Activated B cell treated with CpG ODN at 0.5 μM for 24 hours (primary cell): ENCODE measurements at regions of chr9 and their contacts with region 1.

Region 1: DNA sequence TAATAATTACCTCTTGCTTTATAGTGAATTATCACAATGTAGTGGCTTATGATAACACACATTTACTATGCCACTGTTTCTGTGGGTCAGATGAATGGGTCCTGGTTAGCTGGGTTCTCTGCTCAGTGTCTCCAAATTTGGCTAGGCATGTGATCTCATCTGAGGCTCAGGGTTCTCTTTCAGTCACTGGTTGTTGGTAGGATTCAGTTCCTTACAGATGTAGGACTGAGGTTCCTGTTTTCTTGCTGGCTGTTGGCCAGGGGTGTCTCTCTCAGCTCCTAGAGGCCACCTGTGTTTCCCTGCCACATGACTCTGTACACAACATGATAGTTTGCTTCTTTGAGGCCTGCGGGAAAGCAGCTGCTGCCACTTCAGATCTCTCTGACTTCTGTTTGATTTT is 7.1 kb downstream of the NFX1 start:
- DNase-seq: peak; percentile 31
- ATAC-seq: peak; percentile 90
- H3K4me3 Mint-ChIP-seq: peak overlapping the region; percentile 62
- H3K27ac Mint-ChIP-seq: peak overlapping the region; percentile 93
- H3K4me1 Mint-ChIP-seq: peaks cover 84% of the 10 kb centered on the region
- H3K27me3 Mint-ChIP-seq: no peaks in the 10 kb centered on the region
- CTCF ChIP-seq: no peak

Region 2: GRCh38 chr9:33223696-33224095 is 73.7 kb before region 1 on chr9:
- CTCF ChIA-PET with region 1: no interaction called
- POLR2A ChIA-PET with region 1: no interaction called
- intact Hi-C with region 1: no loop called
- DNase-seq: no peak
- ATAC-seq: no peak
- H3K4me3 Mint-ChIP-seq: no peak overlapping the region
- H3K27ac Mint-ChIP-seq: no peak overlapping the region
- H3K4me1 Mint-ChIP-seq: peaks cover 53% of the 10 kb centered on the region
- H3K27me3 Mint-ChIP-seq: no peaks in the 10 kb centered on the region
- CTCF ChIP-seq: no peak

Region 3: DNA sequence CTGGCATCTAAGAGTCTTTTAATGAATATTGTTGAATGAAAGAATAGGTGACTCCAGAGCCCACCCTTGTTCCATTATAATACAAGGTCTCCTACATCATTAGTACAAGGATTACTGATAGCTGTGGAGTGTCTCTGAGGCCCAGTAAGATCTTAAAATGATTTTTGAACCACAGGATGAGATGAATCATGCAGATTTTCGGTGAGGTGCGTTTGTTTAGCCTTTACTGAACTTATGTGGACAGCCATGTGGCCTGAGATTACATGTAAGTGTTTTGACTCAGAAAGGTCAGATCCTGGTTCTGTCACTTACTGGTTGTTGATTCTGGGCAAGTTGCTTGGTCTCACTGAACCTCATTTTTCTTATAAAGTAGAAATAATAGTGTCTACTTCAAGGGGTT is 14.5 kb after region 1 on chr9:
- CTCF ChIA-PET with region 1: interaction called, 4 read pairs
- POLR2A ChIA-PET with region 1: no interaction called
- intact Hi-C with region 1: loop called (anchors 2 kb)
- DNase-seq: no peak
- ATAC-seq: no peak
- H3K4me3 Mint-ChIP-seq: no peak overlapping the region
- H3K27ac Mint-ChIP-seq: no peak overlapping the region
- H3K4me1 Mint-ChIP-seq: no peaks in the 10 kb centered on the region
- H3K27me3 Mint-ChIP-seq: no peaks in the 10 kb centered on the region
- CTCF ChIP-seq: no peak

Region 4: DNA sequence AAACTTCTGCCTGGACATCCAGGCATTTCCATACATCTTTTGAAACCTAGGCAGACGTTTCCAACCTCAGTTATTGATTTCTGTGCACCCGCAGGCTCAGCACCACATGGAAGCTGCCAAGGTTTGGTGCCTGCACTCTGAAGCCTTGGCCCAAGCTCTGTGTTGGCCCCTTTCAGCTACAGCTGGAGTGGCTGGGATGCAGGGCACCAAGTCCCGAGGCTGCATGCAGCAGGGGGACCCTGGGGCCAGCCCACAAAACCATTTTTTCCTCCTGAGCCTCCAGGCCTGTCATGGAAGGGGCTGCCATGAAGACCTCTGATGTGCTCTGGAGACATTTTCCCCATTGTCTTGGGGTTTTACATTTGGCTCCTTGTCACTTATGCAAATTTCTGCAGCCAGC is 42.8 kb after region 1 on chr9:
- CTCF ChIA-PET with region 1: no interaction called
- POLR2A ChIA-PET with region 1: no interaction called
- intact Hi-C with region 1: loop called (anchors 5 kb)
- DNase-seq: no peak
- ATAC-seq: no peak
- H3K4me3 Mint-ChIP-seq: no peak overlapping the region
- H3K27ac Mint-ChIP-seq: no peak overlapping the region
- H3K4me1 Mint-ChIP-seq: no peaks in the 10 kb centered on the region
- H3K27me3 Mint-ChIP-seq: no peaks in the 10 kb centered on the region
- CTCF ChIP-seq: no peak

Region 5: DNA sequence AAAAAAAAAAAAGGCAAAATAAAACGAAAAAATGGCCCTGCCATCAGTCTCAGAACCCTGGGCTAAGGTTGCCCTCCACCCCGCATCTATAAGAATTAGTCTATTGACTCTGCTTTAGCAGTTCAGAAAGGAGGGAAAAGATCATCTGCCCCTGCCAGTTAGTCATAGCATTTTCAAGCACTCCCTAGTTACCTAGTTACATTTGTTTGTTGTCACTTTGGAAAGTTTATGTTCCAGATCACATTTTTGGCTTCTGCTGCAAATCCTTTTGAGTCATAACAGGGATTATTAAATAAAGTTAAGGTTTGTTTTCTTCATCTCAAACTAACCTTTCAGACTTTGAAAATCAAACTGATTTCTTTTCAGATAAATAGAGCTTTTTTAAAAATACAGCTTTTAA is 52.9 kb after region 1 on chr9:
- CTCF ChIA-PET with region 1: no interaction called
- POLR2A ChIA-PET with region 1: no interaction called
- intact Hi-C with region 1: no loop called
- DNase-seq: no peak
- ATAC-seq: no peak
- H3K4me3 Mint-ChIP-seq: no peak overlapping the region
- H3K27ac Mint-ChIP-seq: no peak overlapping the region
- H3K4me1 Mint-ChIP-seq: no peaks in the 10 kb centered on the region
- H3K27me3 Mint-ChIP-seq: no peaks in the 10 kb centered on the region
- CTCF ChIP-seq: no peak